PC-9 (cell line): ENCODE measurements at regions of chr12 and their contacts with region 1.

Region 1: DNA sequence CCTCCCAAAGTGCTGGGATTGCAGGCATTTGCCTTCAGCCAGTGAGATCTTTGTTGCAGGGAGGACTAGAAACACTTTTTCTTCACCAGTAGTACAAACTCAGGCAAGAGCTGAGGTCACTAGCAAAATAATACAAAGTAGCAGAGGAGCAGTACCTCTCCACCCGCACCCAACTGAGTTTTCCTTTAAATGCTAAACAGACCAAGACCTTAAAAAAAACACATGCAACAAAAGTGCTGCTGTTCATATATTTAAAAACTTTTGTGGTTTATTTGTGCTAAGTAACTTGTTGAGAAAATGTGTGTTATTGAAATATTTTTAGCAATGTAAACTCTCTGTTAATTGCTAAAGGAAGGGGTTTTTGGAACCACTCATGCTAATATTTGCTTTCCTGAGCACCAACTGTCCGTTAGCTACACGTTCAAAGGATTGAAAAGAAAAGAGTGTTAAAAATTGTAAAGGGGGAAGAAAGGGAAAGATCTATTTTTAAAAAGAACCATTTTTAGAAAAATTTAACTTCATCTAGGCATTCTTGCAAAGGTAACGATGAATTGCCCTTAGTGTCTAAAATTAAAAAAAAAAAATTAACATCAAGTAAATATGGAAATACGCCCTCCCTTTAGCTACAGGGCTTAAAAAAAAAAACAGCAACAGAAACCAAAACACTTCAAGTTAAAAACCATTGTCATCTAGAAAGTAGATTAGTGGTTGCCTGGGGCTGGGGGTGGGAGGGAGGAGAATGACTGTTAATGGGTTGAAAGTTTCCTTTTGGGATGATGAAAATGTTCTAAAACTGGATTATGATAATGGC is 114.0 kb upstream of the KRAS start:
- DNase-seq: no peak
- H3K4me3 ChIP-seq: no peak overlapping the region
- H3K27ac ChIP-seq: no peak overlapping the region
- H3K4me1 ChIP-seq: no peaks in the 10 kb centered on the region
- H3K27me3 ChIP-seq: no peaks in the 10 kb centered on the region
- CTCF ChIP-seq: no peak

Region 2: DNA sequence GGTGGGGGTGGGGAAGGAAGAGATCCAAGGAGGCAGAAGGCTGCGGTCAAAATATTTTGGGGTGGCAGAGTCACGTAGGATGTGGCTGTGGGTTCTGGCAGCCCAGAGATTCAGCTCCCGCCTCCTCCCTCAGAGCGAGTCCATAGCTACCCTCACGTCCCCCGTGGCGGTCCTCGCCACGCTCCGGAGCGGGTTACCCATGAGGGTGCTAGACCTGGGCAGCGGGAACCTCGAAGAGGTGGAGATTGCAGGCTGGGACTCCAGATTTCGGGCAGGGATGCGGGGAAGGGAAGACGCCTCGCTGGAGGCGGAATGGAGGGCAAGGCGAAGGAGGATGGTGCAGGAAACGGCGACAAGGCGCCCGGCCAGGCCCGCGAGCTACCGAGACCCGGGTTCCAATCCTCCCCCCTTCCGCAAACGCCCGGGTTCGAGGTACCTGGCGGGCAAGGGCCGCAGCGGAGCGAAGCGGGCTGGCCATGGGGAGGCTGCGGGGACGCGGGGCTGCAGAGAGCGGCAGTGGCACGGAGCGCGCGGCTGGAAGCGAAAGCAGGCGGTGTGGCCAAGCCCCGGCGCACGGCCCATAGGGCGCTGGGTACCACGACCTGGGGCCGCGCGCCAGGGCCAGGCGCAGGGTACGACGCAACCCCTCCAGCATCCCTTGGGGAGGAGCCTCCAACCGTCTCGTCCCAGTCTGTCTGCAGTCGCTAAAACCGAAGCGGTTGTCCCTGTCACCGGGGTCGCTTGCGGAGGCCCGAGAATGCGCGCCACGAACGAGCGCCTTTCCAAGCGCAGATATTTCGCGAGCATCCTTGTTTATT is 462.0 kb before region 1 on chr12:
- CTCF ChIA-PET with region 1: interaction called, 14 read pairs
- POLR2A ChIA-PET with region 1: no interaction called
- intact Hi-C with region 1: no loop called
- DNase-seq: no peak
- H3K4me3 ChIP-seq: no peak overlapping the region
- H3K27ac ChIP-seq: no peak overlapping the region
- H3K4me1 ChIP-seq: peaks cover 3% of the 10 kb centered on the region; the same call in 1 of the 2 replicates
- H3K27me3 ChIP-seq: no peaks in the 10 kb centered on the region
- CTCF ChIP-seq: no peak

Region 3: DNA sequence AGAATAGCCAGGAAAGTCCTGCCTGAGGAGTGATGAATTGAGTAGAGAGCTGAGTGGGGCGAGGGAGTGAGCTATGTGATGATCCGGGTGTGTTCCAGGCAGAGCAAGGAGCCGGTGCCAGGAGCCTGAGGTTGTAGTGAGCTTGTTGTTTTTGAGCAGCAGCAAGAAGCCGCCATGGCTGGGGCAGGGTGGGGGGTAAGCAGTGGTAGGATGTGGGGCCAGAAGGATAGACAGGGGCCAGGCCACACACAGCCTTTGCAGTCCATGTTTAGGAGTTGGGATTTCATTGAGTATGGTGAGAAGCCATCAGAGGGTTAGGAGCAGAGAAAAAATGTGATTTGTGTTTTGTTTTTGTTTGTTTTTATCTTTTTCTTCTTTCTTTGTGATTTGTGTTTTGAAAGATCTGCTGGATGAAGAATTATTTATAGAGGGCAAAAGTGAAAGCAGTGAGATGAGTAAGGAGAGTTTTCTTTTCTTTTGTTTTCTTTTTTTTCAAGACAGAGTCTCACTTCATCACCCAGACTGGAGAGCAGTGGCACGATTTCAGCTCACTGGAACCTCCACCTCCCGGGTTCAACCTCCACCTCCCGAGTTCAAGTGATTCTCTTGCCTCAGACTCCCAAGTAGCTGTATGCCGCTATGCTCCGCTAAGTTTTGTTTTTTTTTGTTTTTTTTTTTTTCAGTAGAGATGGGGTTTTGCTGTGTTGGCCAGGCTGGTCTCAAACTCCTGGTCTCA is 323.6 kb before region 1 on chr12:
- CTCF ChIA-PET with region 1: no interaction called
- POLR2A ChIA-PET with region 1: no interaction called
- intact Hi-C with region 1: no loop called
- DNase-seq: no peak
- H3K4me3 ChIP-seq: no peak overlapping the region
- H3K27ac ChIP-seq: no peak overlapping the region
- H3K4me1 ChIP-seq: no peaks in the 10 kb centered on the region
- H3K27me3 ChIP-seq: no peaks in the 10 kb centered on the region
- CTCF ChIP-seq: no peak

Region 4: GRCh38 chr12:26651566-26652188 is 1286.9 kb after region 1 on chr12:
- CTCF ChIA-PET with region 1: no interaction called
- POLR2A ChIA-PET with region 1: no interaction called
- intact Hi-C with region 1: no loop called
- DNase-seq: peak; percentile 67 to 77
- H3K4me3 ChIP-seq: no peak overlapping the region
- H3K27ac ChIP-seq: no peak overlapping the region
- H3K4me1 ChIP-seq: peaks cover 12% of the 10 kb centered on the region; the same call in 1 of the 2 replicates
- H3K27me3 ChIP-seq: no peaks in the 10 kb centered on the region
- CTCF ChIP-seq: peak; percentile 97